MCF 10A (cell line): ENCODE measurements at regions of chr4 and their contacts with region 1.

Region 1: DNA sequence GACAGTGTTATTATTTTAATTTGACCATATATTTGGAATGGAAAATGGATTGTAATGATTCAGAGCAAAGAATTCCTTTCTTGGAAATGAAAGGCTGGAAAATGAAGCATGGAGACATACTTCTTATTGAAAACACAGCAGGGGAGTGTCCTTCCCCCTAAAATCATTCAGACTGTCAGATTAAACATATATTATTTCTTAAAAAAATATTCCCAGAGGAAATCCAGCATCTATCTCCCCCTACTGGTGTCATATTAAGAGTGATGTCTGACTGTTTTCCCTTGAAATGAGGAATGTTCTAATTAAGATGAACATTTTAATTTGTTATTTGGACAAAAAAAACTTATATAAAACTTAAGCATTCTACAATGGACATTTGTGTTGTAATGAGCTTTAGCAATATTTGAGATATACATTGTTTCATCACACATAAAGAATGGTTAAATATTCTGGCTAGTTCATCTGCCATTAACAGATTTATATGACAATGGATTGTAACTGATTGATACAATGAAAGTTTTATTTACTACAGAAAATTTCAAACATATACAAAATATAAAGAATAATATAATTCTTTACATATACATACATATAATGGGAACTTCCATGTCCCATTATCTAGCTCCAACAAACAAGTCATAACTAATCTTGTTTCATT is 264.6 kb downstream of the SPRY1 start:
- DNase-seq: peak; percentile 39
- H3K4me3 Mint-ChIP-seq: no peak overlapping the region
- H3K27ac Mint-ChIP-seq: no peak overlapping the region
- H3K4me1 Mint-ChIP-seq: no peaks in the 10 kb centered on the region
- H3K27me3 Mint-ChIP-seq: no peaks in the 10 kb centered on the region
- CTCF ChIP-seq: peak; percentile 46

Region 2: DNA sequence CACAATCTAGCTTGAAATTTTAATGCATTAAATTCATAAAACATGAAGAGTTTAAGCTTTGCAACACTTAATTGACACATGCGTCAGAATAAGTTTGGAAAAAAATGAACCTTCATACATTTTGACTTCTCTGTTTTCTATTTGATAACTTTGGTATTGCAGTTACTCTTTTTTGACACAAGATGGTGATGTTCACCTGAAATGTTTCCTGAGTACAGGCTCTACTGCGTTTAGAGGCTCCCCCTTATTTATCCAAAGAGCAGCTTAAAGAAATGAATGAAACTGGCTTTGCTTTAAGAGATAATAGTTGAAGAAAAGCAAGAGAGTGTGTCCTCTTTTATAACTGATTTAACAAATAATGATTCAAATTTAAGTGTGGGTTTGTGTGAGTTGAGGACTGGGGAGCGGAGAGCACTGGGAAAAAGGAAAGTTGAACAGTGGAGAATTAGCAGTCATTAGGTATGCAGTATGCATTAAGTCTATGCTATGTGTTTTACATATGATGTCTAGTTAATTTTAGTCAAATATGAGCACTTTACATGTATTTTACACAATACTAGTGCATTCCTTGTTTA is 558.2 kb before region 1 on chr4:
- CTCF ChIA-PET with region 1: interaction called, 14 read pairs
- POLR2A ChIA-PET with region 1: no interaction called
- intact Hi-C with region 1: loop called (anchors 1 kb)
- DNase-seq: peak; percentile 49
- H3K4me3 Mint-ChIP-seq: no peak overlapping the region
- H3K27ac Mint-ChIP-seq: peak overlapping the region; percentile 29
- H3K4me1 Mint-ChIP-seq: peaks cover 5% of the 10 kb centered on the region
- H3K27me3 Mint-ChIP-seq: no peaks in the 10 kb centered on the region
- CTCF ChIP-seq: peak; percentile 58

Region 3: GRCh38 chr4:123350191-123350544 is 311.0 kb before region 1 on chr4:
- CTCF ChIA-PET with region 1: interaction called, 55 read pairs
- POLR2A ChIA-PET with region 1: no interaction called
- intact Hi-C with region 1: loop called (anchors 1 kb)
- DNase-seq: peak; percentile 73
- H3K4me3 Mint-ChIP-seq: no peak overlapping the region
- H3K27ac Mint-ChIP-seq: no peak overlapping the region
- H3K4me1 Mint-ChIP-seq: peaks cover 23% of the 10 kb centered on the region
- H3K27me3 Mint-ChIP-seq: no peaks in the 10 kb centered on the region
- CTCF ChIP-seq: peak; percentile 35

Region 4: DNA sequence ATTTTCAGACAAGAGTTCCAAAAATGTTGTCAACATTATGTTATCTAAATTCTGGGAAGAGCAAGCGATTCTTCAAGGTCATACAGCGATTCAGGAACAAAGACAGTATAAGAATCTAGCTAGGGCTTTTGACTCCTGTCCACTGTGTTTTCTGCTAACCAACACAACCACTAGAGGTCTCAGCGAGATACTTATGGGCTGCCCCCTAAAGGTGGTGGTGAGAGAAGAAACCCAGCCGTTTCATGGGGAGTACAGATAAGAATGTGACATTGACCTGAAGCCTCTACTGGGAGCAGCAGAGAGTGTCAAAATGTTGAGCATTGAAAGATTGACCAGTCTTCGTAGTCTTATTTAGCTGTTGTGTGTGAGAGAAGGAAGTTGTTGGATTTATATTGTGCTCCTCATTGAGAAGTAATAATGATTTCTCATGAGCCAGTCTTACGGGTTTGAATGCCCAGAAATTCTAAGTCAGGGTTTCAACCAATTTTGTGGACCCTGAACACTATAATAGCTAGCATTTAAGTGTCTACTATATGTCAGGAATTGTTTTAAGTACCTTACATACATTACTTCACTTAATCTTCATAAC is 96.4 kb before region 1 on chr4:
- CTCF ChIA-PET with region 1: interaction called, 34 read pairs
- POLR2A ChIA-PET with region 1: no interaction called
- intact Hi-C with region 1: loop called (anchors 1 kb)
- DNase-seq: peak; percentile 86
- H3K4me3 Mint-ChIP-seq: no peak overlapping the region
- H3K27ac Mint-ChIP-seq: no peak overlapping the region
- H3K4me1 Mint-ChIP-seq: peaks cover 7% of the 10 kb centered on the region
- H3K27me3 Mint-ChIP-seq: no peaks in the 10 kb centered on the region
- CTCF ChIP-seq: peak; percentile 55

Region 5: GRCh38 chr4:123671633-123672404 is 10.6 kb after region 1 on chr4:
- CTCF ChIA-PET with region 1: interaction called, 11 read pairs
- POLR2A ChIA-PET with region 1: no interaction called
- intact Hi-C with region 1: no loop called
- DNase-seq: no peak
- H3K4me3 Mint-ChIP-seq: no peak overlapping the region
- H3K27ac Mint-ChIP-seq: no peak overlapping the region
- H3K4me1 Mint-ChIP-seq: peaks cover 14% of the 10 kb centered on the region
- H3K27me3 Mint-ChIP-seq: no peaks in the 10 kb centered on the region
- CTCF ChIP-seq: no peak